ENCODE measurements at regions of chr2 and their contacts with region 1.

Region 1: GRCh38 chr2:68295516-68295915 is 24.2 kb downstream of the CNRIP1 start:
- DNase-seq: peak; percentile 47
- ATAC-seq: no peak
- H3K4me3 ChIP-seq: no peak overlapping the region
- H3K4me3 Mint-ChIP-seq: no peak overlapping the region
- H3K27ac ChIP-seq: no peak overlapping the region
- H3K27ac Mint-ChIP-seq: no peak overlapping the region
- H3K4me1 ChIP-seq: peaks cover 11 to 12% of the 10 kb centered on the region in 2 donors
- H3K4me1 Mint-ChIP-seq: peaks cover 15% of the 10 kb centered on the region
- H3K27me3 ChIP-seq: no peaks in the 10 kb centered on the region
- H3K27me3 Mint-ChIP-seq: no peaks in the 10 kb centered on the region
- CTCF ChIP-seq: no peak

Region 2: GRCh38 chr2:68309426-68309825 is 13.9 kb after region 1 on chr2:
- CTCF ChIA-PET with region 1: interaction called, 10 read pairs
- POLR2A ChIA-PET with region 1: no interaction called
- intact Hi-C with region 1: no loop called
- DNase-seq: no peak
- ATAC-seq: no peak
- H3K4me3 ChIP-seq: no peak overlapping the region
- H3K4me3 Mint-ChIP-seq: no peak overlapping the region
- H3K27ac ChIP-seq: no peak overlapping the region
- H3K27ac Mint-ChIP-seq: no peak overlapping the region
- H3K4me1 ChIP-seq: no peaks in the 10 kb centered on the region
- H3K4me1 Mint-ChIP-seq: no peaks in the 10 kb centered on the region
- H3K27me3 ChIP-seq: peaks cover 0 to 7% (median under 1%) of the 10 kb centered on the region in 4 experiments
- H3K27me3 Mint-ChIP-seq: peaks cover 4% of the 10 kb centered on the region
- CTCF ChIP-seq: no peak

Region 3: GRCh38 chr2:68951899-68952298 is 656.4 kb after region 1 on chr2:
- CTCF ChIA-PET with region 1: no interaction called
- POLR2A ChIA-PET with region 1: no interaction called
- intact Hi-C with region 1: no loop called
- DNase-seq: no peak
- ATAC-seq: no peak
- H3K4me3 ChIP-seq: no peak overlapping the region
- H3K4me3 Mint-ChIP-seq: no peak overlapping the region
- H3K27ac ChIP-seq: no peak overlapping the region
- H3K27ac Mint-ChIP-seq: no peak overlapping the region
- H3K4me1 ChIP-seq: no peaks in the 10 kb centered on the region
- H3K4me1 Mint-ChIP-seq: no peaks in the 10 kb centered on the region
- H3K27me3 ChIP-seq: peaks cover 0 to 10% (median 1%) of the 10 kb centered on the region in 4 experiments
- H3K27me3 Mint-ChIP-seq: peaks cover 27% of the 10 kb centered on the region
- CTCF ChIP-seq: no peak